Heart left ventricle (tissue), 16 donors: ENCODE measurements at regions of chr5 and their contacts with region 1.

Region 1: DNA sequence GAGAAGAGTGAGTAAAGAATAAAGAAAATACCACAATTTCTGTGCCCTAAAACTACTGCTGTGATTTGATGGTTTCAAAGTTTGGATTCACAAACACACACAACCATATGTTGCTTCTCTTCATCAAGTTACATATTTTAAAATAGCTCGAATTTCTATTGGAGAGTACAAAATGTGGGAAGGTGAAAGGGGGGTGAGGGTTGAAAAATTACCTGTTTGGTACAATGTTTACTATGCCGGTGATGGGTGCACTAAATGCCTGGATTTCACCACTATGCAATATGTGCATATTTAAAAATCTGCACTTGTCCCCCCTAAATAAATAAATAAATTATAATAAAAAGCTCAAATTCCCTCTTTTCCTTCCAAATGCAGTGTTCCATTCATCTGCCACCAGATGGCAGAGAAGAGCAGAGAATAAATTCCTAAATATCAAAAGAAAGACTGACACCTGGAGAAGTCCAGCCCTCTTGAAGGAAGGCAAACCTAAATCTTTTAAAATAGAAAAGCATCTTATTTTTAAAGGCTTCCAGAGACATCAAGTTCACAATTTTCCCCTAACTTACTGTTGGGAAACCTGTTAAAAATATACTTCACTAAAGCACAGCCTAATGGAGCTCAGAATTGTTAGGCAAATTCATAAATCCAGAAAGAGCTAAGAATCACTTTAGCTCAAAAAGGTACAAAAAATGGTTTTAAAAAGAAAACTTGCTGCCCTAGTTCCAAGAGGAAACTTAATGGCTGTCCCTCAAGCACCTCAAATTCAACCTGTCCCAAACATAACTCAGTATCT is 24.8 kb upstream of the HNRNPA0 start:
- DNase-seq: no peak
- ATAC-seq: no peak
- H3K4me3 ChIP-seq: no peak overlapping the region
- H3K27ac ChIP-seq: no peak overlapping the region
- H3K4me1 ChIP-seq: peaks cover 0 to 7% (median 0%) of the 10 kb centered on the region in 12 donors
- H3K27me3 ChIP-seq: no peaks in the 10 kb centered on the region
- CTCF ChIP-seq: peak; percentile 64 to 85 (median 74)
- POLR2A ChIP-seq: no peak

Region 2: GRCh38 chr5:136420168-136420898 is 1358.6 kb before region 1 on chr5:
- intact Hi-C with region 1: no loop called
- DNase-seq: no peak
- ATAC-seq: no peak
- H3K4me3 ChIP-seq: no peak overlapping the region
- H3K27ac ChIP-seq: no peak overlapping the region
- H3K4me1 ChIP-seq: no peaks in the 10 kb centered on the region
- H3K27me3 ChIP-seq: no peaks in the 10 kb centered on the region
- CTCF ChIP-seq: no peak
- POLR2A ChIP-seq: no peak

Region 3: GRCh38 chr5:137660349-137660817 is 118.6 kb before region 1 on chr5:
- intact Hi-C with region 1: no loop called
- DNase-seq: peak in 4 of 5 donors; percentile 60 to 70 (median 68)
- ATAC-seq: peak; percentile 69 to 91 (median 85)
- H3K4me3 ChIP-seq: no peak overlapping the region
- H3K27ac ChIP-seq: no peak overlapping the region
- H3K4me1 ChIP-seq: peaks cover 0 to 11% (median 5%) of the 10 kb centered on the region in 12 donors
- H3K27me3 ChIP-seq: no peaks in the 10 kb centered on the region
- CTCF ChIP-seq: peak; percentile 66 to 89 (median 78)
- POLR2A ChIP-seq: no peak

Region 4: DNA sequence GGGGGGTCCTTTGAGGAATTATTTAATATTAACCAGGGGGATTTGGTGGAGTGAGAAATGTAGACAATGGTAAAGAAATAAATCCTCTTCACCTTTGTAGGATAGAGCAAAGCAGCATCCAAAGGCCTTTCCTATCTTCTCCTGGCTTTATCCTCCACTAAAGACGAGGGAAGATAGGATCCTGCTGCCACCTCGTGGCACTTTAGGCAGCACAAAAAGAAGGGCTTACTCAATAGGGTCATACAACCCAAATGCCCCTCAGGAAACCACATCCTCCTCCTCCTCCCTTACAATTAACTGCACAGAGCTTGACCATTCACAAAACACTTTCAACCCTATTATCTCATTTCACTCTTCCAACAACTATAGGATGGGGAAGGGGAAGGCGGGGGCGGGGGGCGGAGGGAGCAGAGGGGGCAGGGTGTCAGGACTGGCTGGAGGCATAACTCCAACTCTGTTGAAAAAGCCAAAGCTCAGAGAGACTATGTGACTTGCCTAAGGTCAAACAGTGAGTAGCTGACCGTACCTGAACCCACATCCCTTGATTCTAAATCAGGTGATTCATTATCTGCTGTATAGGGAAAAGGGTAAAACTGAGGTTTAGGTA is 43.3 kb after region 1 on chr5:
- intact Hi-C with region 1: loop called in 2 of 10 experiments (anchors 5 kb)
- DNase-seq: no peak
- ATAC-seq: peak; percentile 22 to 73 (median 64)
- H3K4me3 ChIP-seq: no peak overlapping the region
- H3K27ac ChIP-seq: peak overlapping the region in 4 of 12 donors; percentile 5 to 54 (median 19)
- H3K4me1 ChIP-seq: peaks cover 0 to 19% (median 5%) of the 10 kb centered on the region in 12 donors
- H3K27me3 ChIP-seq: no peaks in the 10 kb centered on the region
- CTCF ChIP-seq: peak in 10 of 12 donors; percentile 9 to 49 (median 32)
- POLR2A ChIP-seq: no peak

Region 5: DNA sequence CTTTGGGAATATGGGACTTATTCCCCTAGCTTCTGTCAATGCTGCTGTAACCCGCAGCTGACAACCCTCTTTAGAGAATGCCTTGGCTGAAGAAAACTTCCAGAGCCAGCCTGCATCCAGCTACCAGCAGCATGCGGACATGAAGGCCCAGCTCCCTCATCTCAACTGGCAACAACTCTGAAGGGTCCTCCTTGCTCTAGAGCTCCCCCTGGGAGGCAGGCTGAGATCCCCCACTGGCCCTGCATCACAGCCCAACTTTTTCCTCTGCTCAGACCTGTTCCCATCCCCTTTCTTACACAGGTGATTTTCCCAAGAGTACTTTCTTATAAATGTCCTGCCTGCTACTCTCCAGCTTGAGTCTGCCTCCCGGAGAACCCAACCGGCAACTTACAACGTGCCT is 286.1 kb after region 1 on chr5:
- intact Hi-C with region 1: loop called in 1 of 10 experiments (anchors 5 kb)
- DNase-seq: no peak
- ATAC-seq: no peak
- H3K4me3 ChIP-seq: no peak overlapping the region
- H3K27ac ChIP-seq: no peak overlapping the region
- H3K4me1 ChIP-seq: no peaks in the 10 kb centered on the region
- H3K27me3 ChIP-seq: no peaks in the 10 kb centered on the region
- CTCF ChIP-seq: peak in 4 of 12 donors; percentile 10 to 24 (median 19)
- POLR2A ChIP-seq: no peak

Region 6: GRCh38 chr5:138128334-138128733 is 349.4 kb after region 1 on chr5:
- intact Hi-C with region 1: loop called in 8 of 10 experiments (anchors 2 to 10 kb)
- DNase-seq: no peak
- ATAC-seq: no peak
- H3K4me3 ChIP-seq: no peak overlapping the region
- H3K27ac ChIP-seq: no peak overlapping the region
- H3K4me1 ChIP-seq: no peaks in the 10 kb centered on the region
- H3K27me3 ChIP-seq: no peaks in the 10 kb centered on the region
- CTCF ChIP-seq: no peak
- POLR2A ChIP-seq: no peak

Region 7: DNA sequence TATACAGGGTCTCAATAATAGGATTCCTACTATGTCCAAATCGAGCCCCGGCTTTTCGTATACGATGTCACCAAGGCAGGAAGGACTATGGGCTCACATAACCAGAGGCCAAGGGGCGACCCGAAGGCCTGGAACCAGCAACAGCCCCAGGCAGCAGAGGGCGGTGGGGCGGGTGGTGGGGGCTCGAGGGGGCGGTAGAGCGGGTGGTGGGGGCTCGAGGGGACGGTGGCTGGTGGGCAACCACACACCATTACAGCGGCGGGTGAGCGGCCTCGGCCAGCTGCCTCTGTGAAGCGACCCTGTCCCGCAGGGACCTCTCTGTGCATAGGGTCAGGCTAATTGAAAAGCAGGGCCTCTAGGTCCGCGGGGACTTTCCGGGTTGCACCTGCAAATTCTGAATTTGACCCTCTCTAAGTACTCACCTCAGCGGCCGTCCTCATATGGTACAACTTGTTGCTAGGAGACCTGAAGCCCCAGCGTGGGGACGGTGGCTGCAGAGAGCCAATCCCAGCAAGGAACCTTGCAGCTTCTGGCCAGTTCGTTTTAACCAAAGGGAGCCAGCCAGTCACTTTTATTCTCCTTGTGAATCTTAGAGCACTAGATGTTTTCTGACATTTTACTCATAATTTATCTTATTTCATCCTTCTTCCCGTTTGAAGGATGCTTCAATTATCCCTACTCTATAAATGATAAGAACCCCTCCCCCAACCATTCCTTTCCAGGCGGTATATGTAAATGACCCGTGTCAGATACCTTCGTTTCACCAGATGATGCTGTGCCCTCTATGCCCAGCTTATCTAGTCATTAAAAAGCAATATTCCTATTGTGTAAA is 360.2 kb after region 1 on chr5 and contains the start of gene NME5:
- intact Hi-C with region 1: loop called in 7 of 10 experiments (anchors 5 to 10 kb)
- DNase-seq: peak; percentile 55 to 80 (median 76)
- ATAC-seq: peak; percentile 71 to 96 (median 94)
- H3K4me3 ChIP-seq: peak within 1 kb of the TSS in 11 of 12 donors; percentile 24 to 83 (median 66)
- H3K27ac ChIP-seq: peak within 1 kb of the TSS in 1 of 12 donors; percentile 16
- H3K4me1 ChIP-seq: peaks cover 0 to 7% (median 0%) of the 10 kb centered on the region in 12 donors
- H3K27me3 ChIP-seq: peaks cover 0 to 22% (median 0%) of the 10 kb centered on the region in 9 donors
- CTCF ChIP-seq: no peak
- POLR2A ChIP-seq: no peak
- total RNA-seq, gene NME5: 0.50 to 5.1 (median 3.4) TPM

Region 8: GRCh38 chr5:138536665-138537315 is 757.8 kb after region 1 on chr5:
- intact Hi-C with region 1: no loop called
- DNase-seq: no peak
- ATAC-seq: peak; percentile 18 to 33 (median 28)
- H3K4me3 ChIP-seq: no peak overlapping the region
- H3K27ac ChIP-seq: peak overlapping the region in 1 of 12 donors; percentile 8
- H3K4me1 ChIP-seq: peaks cover 8 to 63% (median 39%) of the 10 kb centered on the region in 12 donors
- H3K27me3 ChIP-seq: no peaks in the 10 kb centered on the region
- CTCF ChIP-seq: peak in 4 of 12 donors; percentile 9 to 36 (median 28)
- POLR2A ChIP-seq: no peak